ENCODE measurements at regions of chr6 and their contacts with region 1.

Region 1: DNA sequence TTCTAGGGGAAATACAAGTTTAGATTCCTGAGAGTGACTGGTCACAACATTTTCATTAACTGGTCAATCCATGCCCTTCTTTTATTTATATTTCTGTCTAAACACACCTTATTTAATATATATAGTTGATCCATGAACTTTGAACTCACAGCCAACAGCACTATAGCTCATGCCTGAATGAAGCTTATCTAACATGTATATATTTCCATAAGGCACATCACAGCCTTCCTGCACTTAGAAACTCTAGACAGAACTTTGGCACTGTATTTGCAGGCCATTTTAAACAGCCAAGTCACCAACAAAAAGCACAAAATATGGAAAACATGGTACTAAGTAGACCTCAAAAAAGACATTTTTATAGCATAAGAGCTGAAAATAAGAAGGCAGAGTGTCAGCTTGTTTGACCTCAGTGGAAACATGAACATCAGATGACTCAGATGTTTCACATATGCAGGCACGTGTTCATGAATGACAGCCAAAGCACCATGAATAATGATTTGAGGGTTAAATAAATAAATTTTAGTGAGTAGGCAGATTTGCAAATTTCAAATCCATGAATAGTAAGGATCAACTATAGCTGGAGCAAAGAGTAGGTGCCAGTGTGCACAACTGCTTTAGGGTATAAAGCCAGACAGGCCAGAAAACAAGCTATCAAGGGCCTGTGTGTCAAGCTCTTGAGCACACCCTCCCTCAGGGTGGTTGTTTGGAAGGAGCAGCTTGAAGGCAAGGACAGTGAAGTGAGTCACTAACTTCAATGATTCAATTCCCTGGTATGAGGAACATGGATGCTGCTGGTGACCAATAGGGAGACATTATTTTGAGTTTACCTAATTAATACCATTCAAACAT is 88.9 kb upstream of the NT5E start:
- DNase-seq: peak; percentile 86
- H3K4me3 ChIP-seq: no peak overlapping the region
- CTCF ChIP-seq: no peak

Region 2: DNA sequence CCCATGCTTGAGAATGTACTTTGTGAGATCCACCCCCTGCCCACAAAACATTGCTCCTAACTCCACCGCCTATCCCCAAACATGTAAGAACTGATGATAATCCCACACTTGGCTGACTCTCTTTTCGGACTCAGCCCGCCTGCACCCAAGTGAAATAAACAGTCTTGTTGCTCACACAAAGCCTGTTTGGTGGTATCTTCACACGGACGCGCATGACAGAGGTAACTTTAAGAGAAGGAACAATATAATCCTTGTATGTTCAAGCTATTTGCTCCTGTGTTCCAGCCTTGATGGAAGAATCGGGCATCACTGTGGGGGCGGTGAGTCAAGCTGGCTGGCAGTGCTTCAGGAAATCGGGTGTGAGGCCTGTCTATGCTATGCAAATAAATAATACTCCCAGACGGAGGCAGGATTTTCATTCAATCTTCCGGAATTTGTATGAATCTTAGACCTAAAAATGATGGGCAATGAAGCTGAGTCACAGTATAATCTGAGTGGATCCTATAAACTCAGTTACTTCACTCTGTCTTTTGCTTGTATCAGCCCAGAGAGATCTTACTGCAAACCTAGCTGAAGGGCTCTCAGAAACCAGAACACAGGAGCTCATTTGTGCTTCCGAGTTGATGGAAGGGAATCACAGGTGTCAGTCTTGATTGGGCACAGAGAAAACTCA is 43.6 kb after region 1 on chr6:
- CTCF ChIA-PET with region 1: interaction called, 6 read pairs
- POLR2A ChIA-PET with region 1: interaction called, 20 read pairs
- DNase-seq: peak; percentile 90
- H3K4me3 ChIP-seq: no peak overlapping the region; the same call in 1 of the 2 replicates
- CTCF ChIP-seq: no peak

Region 3: GRCh38 chr6:85449818-85450759 is 89.1 kb after region 1 on chr6 and contains the start of gene NT5E:
- CTCF ChIA-PET with region 1: interaction called, 32 read pairs
- POLR2A ChIA-PET with region 1: interaction called, 33 read pairs
- DNase-seq: no peak
- H3K4me3 ChIP-seq: peak within 1 kb of the TSS; percentile 78
- CTCF ChIP-seq: peak; percentile 9

Region 4: GRCh38 chr6:85460921-85461797 is 100.1 kb after region 1 on chr6:
- CTCF ChIA-PET with region 1: interaction called, 21 read pairs
- POLR2A ChIA-PET with region 1: interaction called, 10 read pairs
- DNase-seq: no peak
- H3K4me3 ChIP-seq: no peak overlapping the region
- CTCF ChIP-seq: no peak

Region 5: GRCh38 chr6:85537055-85537494 is 176.1 kb after region 1 on chr6:
- CTCF ChIA-PET with region 1: interaction called, 50 read pairs
- POLR2A ChIA-PET with region 1: no interaction called
- DNase-seq: no peak
- H3K4me3 ChIP-seq: no peak overlapping the region
- CTCF ChIP-seq: peak; percentile 5

Measured in AG04449 (cell line).